ENCODE measurements at regions of chr2 and their contacts with region 1.

Region 1: GRCh38 chr2:177489719-177490301 is 97.2 kb downstream of the AGPS start:
- DNase-seq: no peak
- H3K4me3 ChIP-seq: no peak overlapping the region
- H3K27ac ChIP-seq: no peak overlapping the region
- H3K27me3 ChIP-seq: no peaks in the 10 kb centered on the region
- CTCF ChIP-seq: peak; percentile 77

Region 2: GRCh38 chr2:177325270-177325929 is 164.4 kb before region 1 on chr2:
- CTCF ChIA-PET with region 1: no interaction called
- POLR2A ChIA-PET with region 1: no interaction called
- DNase-seq: no peak
- H3K4me3 ChIP-seq: no peak overlapping the region
- H3K27ac ChIP-seq: no peak overlapping the region
- H3K27me3 ChIP-seq: no peaks in the 10 kb centered on the region
- CTCF ChIP-seq: no peak

Region 3: DNA sequence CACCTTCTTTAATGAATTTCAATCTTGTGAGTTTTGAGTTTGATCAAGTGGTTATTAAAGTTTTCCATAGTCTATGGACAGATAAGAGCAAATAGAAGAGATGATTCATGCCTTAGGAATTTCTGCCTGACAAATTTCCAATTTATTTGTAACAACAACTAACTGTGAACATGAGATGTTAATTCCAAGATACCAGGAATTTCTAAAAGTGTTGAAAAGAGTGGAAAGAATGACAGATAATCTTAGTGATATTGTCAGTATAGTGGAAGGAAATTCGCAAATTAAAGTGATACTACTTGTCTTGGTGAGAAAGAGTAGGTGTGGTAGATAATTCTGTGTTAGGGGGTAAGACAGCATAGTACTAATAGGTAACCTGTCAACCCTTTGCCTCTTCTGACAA is 14.8 kb before region 1 on chr2:
- CTCF ChIA-PET with region 1: interaction called, 27 read pairs
- POLR2A ChIA-PET with region 1: no interaction called
- DNase-seq: no peak
- H3K4me3 ChIP-seq: no peak overlapping the region
- H3K27ac ChIP-seq: no peak overlapping the region
- H3K27me3 ChIP-seq: no peaks in the 10 kb centered on the region
- CTCF ChIP-seq: no peak

Region 4: DNA sequence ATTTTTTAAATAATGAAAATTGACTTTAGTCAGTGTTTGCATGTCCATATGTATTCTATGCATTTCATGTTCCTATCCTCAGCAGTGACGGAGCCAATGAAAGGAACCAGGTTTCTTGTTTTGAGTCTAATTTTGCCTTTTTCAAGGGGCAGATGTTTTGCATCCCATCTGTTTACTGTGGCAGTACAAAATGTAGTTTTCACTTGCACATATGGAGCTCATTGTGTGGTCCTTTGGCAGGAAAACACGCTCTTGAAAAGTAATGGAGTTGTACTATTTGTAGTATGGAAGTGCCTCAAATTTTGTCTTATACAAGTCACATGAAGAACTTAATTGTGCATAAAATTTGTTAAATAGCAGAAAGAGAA is 30.5 kb after region 1 on chr2:
- CTCF ChIA-PET with region 1: interaction called, 50 read pairs
- POLR2A ChIA-PET with region 1: no interaction called
- DNase-seq: no peak
- H3K4me3 ChIP-seq: no peak overlapping the region
- H3K27ac ChIP-seq: no peak overlapping the region
- H3K27me3 ChIP-seq: no peaks in the 10 kb centered on the region
- CTCF ChIP-seq: no peak

Region 5: GRCh38 chr2:177599139-177599688 is 109.4 kb after region 1 on chr2:
- CTCF ChIA-PET with region 1: interaction called, 112 read pairs
- POLR2A ChIA-PET with region 1: no interaction called
- DNase-seq: no peak
- H3K4me3 ChIP-seq: no peak overlapping the region
- H3K27ac ChIP-seq: no peak overlapping the region
- H3K27me3 ChIP-seq: peaks cover 10% of the 10 kb centered on the region
- CTCF ChIP-seq: no peak

Region 6: DNA sequence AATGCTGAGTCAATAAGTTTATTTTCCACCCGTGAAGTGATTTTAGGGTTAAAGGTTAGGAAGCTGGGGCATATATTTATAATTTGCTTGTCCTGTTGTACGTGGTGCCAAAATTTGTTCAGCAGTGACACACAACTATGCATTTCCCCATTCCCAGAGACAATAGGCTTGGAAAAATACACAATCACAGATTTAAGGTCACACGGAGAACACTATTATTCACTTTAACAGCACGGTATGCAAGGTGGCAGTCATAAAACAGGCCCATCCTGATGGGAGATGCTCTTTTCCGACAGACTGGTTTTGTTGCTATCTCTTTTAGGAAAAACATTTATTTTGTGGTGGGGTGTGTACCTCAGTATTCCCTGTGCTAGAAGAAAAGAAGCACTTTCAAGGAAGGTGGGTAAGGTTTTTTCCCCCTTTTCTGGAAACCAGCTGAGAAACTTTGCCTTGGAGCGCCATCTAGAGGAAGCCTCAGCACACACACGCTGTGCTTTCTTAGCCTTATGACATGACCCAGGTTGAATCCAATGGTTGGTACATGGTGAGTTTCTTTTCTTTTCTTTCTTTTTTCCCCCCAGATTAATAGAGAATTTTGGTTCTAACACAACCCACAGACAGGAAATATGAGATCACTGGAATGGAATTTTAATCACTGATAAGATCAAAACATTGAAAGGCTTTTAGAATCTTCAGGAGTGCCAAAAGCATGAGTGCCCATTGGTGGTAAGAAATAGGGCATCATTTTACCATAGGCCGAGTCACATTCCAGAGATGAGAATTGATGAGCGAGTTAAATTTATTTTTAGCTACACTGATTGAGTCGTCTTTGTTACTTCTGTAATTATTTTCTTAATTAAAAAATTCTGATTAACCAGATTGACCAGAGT is 234.8 kb after region 1 on chr2:
- CTCF ChIA-PET with region 1: interaction called, 41 read pairs
- POLR2A ChIA-PET with region 1: no interaction called
- DNase-seq: peak; percentile 7
- H3K4me3 ChIP-seq: no peak overlapping the region
- H3K27ac ChIP-seq: no peak overlapping the region
- H3K27me3 ChIP-seq: peaks cover 8% of the 10 kb centered on the region
- CTCF ChIP-seq: peak; percentile 89

Measured in AG04450 (cell line).